GM18951 (cell line): ENCODE measurements at regions of chr4 and their contacts with region 1.

Region 1: DNA sequence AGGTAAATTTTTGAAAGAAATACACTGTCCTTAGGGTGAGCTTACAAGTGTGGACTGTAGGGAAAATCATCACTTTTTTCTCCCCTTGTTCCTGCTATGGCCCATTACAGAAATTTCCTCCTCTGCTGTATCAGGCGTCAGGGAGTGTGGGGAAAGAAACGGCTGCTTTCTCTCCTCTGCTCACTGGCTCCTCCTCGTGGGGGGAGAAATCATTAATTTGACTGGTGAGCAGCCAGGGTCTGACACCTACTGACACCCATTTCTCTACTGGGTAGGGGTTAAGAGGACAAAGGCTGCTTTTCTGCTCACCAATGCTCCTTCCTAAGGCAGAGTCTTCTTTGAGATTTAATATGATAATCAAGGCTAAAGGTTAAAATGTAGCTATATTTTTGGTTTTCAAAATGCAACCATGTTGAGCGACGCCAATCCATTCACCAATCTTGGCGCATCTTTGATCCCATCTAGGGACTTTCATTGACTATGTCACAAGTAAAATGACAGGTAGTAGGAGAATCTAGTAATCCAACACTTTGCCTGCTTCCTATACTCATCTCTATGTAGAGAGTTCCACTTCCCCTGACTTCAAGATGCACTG is 25.1 kb downstream of the SETD7 start:
- POLR2A ChIP-seq: no peak

Region 2: DNA sequence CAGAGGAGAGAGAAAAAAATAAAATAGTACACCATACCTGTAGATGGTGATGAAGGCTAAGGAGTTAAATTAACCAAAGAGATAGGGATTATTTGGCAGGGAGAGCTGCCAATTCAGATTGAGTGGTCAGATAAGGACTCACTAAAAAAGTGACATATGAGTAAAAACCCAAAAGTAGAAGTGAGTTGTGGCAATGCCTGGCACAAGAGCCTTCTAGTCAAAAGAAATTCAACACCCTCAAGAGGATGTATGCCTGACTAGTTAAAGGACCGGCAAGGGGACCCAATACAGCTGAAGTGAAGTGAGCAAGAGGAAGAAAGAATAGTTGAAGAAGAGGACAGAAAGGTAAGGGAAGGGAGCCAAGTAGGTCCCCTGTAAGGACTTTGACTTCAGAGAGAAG is 388.8 kb before region 1 on chr4:
- in situ Hi-C with region 1: no loop called
- POLR2A ChIP-seq: no peak

Region 3: DNA sequence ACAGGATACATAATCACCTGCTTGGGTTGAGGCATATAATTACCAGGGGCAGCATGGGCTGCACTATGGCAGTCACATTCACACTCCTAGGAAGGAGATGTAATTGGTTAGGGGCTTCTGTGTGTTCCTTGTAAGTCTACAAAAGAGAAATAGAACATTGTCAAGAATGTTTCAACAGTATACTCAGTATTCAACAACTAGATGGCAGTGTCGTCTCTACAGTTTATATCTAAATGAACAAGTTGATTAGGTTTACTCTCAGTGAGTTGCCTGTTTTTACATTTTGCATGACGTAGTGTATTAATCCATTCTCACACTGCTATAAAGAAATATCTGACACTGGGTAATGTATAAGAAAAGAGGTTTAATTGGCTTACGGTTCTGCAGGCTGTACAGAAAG is 127.5 kb before region 1 on chr4:
- in situ Hi-C with region 1: loop called (anchors 10 kb)
- POLR2A ChIP-seq: no peak